RWPE1 (cell line): ENCODE measurements at regions of chr17 and their contacts with region 1.

Region 1: DNA sequence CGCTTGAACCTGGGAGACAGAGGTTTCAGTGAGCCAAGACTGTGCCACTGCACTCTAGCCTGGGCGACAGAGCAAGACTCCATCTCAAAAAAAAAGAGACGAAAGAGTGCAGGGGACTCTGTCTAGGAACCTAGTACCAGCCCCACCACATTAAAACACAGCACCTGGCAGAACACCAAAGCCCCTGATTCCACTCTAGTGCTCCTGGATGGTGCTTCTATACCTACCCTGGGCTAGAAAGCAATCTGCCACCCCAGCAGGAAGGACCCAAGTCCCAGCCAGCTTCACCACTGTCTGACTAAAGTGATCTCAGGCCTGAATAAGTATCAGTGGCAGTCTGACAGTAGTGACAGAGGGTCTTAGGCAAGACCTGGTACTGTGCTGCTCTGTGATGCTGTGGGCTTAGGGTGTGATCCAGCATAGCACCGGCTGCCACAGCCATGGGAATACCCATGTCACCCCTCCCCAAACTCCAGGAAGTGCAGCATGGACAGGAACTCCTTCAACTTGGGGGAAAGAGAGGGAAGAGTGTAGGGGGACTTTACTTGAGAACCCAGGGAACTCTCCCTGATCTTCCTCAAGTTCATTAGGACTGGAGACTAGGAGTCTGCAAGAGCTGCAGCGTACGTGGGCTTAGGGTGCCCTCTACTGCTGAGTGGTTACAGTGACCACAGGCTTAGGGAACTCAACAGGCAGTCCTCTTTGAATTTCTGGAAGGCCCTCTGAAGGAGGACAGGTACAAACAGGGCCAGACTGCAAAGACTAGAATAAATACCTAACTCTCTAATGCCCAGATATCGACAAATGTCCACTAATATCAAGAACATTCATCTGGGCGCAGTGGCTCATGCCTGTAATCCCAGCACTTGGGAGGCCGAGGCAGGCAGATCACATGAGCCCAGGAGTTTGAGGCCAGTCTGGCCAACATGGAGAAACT is 30.0 kb upstream of the RNF43 start:
- DNase-seq: peak; percentile 69
- H3K27ac ChIP-seq: no peak overlapping the region
- CTCF ChIP-seq: peak; percentile 76

Region 2: DNA sequence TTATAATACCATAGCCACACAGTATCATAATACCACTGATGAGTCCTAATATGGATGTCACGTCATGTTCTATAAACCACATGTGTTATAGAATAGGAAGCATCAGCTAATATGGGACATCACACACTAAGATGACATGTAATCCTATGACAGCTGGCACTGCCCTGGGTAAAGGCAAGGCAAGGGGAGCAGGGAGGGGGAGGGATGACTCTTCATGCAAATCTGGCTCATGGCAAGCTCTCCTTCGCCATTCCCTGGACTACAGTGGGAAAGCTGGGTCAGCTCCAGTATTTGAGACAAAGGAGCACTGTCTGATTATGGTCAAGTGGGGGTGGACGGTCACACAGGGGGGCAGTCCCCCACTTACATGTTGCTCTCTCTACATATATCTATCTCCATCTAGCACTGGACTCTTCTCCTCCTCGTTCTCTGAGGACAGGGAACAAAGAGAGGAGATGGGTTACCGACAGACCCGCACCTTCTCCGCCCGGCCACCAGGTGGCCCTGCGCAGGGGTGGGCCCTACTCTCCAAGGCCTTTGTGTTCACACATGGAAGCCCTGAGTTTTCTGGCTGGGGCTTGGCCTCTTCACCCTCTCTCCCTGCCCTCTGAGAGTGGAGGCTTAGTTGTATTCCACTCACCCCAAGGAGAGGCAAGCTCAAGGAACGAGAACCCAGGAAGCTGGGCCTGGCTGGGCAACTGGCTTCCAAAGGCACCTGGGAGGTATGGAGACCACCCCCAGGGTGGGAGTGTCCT is 143.2 kb before region 1 on chr17:
- CTCF ChIA-PET with region 1: interaction called, 11 read pairs
- POLR2A ChIA-PET with region 1: no interaction called
- DNase-seq: peak; percentile 67
- H3K27ac ChIP-seq: no peak overlapping the region
- CTCF ChIP-seq: peak; percentile 72

Region 3: GRCh38 chr17:58317421-58318064 is 129.8 kb before region 1 on chr17:
- CTCF ChIA-PET with region 1: interaction called, 37 read pairs
- POLR2A ChIA-PET with region 1: no interaction called
- DNase-seq: peak; percentile 75
- H3K27ac ChIP-seq: no peak overlapping the region
- CTCF ChIP-seq: peak; percentile 75

Region 4: DNA sequence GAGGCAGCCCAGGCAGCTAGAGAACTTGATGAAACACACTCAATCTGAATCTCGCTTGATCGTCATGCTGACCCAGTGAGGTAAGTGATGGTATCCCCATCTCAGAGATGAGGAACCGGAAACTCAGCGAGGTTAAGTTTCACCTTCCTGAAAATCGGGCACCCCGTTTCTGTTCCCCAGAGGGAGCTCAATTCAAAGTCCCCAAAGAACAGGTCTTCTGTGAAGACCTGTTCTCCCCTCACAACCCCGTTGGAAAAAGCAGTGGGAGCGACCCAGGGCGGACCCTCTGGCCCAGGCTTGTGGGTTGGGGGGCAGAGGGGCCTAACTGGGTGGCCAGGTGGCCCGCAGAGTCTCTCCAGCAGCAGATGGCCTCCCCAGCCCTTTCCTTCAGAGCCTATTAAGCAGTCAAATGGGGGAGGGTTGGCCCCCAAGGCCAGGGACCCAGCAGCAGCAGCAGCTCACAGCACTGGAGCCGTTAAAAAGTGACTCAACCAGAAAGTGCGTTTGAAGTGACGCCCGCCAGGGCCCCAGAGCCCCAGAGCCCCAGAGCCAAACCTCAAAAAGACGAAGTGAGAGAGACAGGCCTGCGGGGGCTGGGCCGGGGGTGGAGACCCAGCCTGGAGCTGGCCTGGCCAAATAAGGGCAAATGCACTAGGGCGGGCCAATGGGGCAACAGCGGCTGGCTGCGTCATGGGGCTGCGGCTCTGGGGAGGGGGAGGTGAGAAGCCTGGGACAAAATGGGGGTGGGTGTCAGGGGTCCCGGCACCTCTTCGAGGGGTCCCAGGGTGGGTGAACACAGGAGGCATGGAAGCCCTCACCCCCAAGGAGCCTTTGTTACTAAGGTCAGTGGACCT is 109.5 kb before region 1 on chr17:
- CTCF ChIA-PET with region 1: no interaction called
- POLR2A ChIA-PET with region 1: no interaction called
- DNase-seq: no peak
- H3K27ac ChIP-seq: no peak overlapping the region
- CTCF ChIP-seq: no peak

Region 5: DNA sequence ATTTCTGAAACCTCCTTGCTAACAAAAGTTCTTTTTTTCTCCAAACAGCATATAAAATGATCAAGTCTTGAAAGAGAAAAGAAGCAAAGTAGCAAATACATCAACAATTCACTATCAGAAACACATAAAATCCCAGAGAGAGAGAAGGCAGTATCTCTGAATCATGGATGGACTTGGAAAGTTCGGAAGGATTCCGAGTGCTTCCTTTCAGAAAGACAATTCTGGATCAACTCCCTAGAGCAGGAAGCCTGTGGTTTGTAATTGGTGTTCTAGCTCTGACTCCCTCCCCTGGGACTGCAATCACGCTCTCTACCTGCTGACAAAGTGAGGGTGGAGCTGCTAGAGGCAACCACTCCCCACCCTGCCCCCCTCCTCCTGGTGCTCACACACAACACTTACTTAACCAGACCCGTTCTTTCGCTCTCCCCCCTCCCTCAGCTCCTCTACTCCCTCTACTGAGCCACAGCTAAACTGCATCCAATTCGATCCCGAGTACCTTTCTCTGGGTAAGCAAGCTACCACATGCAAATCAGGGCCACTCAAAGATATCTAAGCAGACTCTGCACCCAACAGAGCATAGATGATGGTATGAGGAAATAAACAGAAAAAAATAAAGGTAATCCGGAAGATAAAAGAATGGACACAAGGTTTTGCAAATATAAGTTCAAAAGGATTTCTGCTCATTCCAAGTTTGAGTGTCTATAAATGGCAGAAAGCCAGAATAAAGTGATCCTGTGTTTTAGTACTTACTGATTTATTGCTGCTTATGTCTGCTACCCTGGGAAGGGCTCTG is 29.8 kb before region 1 on chr17 and contains the start of gene RNF43:
- CTCF ChIA-PET with region 1: no interaction called
- POLR2A ChIA-PET with region 1: no interaction called
- DNase-seq: peak; percentile 99
- H3K27ac ChIP-seq: peak within 1 kb of the TSS; percentile 61
- CTCF ChIP-seq: peak; percentile 95

Region 6: GRCh38 chr17:58517734-58518609 is 70.7 kb after region 1 on chr17:
- CTCF ChIA-PET with region 1: no interaction called
- POLR2A ChIA-PET with region 1: no interaction called
- DNase-seq: peak; percentile 100
- H3K27ac ChIP-seq: peak overlapping the region; percentile 97
- CTCF ChIP-seq: no peak